Heart left ventricle (tissue), 16 donors: ENCODE measurements at regions of chr11 and their contacts with region 1.

Region 1: DNA sequence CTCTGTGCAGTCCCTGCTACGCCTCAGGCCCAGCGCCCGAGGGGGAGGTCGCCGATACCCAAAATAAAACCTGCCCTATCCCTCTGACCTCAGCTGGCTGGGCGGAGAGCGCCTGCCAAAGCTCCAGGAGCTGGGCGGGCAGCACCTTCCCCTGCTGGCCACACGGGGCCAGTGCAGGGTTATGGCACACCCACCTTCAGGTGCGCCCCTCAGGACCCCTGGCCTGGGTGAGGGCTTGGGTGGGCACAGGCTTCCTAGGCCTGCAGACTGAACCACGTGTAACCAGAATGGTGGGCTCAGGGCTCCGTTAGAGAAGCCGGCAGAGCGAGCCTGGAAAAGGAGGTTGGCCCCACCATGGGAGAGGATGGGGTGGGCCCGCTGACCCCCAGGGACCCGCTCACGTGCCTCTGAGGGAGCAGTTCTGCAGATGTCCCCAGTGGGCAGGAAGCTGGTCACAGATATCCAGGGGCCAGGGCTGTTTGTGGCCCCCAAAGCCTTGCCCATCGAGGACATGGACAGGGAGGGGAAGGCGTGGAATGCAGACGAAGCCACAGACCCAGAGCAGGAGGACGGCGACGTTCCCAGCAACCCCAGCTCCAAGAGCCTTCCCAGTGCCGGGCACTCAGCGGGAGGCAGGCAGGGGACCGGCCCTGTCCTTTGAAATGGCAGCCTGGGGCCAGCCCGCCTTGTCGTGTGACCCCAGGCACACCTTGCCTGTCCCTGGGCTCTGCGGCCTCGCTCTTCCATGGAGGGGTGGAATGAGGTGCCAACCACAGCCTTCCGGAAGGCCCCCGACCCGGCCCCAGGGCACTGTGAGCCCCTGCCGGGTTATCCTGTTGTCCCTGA is 1.6 kb upstream of the TNNT3 start:
- DNase-seq: peak in 4 of 5 donors; percentile 66 to 84 (median 77)
- ATAC-seq: peak; percentile 45 to 67 (median 59)
- H3K4me3 ChIP-seq: peak overlapping the region in 8 of 12 donors; percentile 7 to 40 (median 26)
- H3K27ac ChIP-seq: peak overlapping the region in 11 of 12 donors; percentile 38 to 93 (median 85)
- H3K4me1 ChIP-seq: peaks cover 12 to 66% (median 47%) of the 10 kb centered on the region in 12 donors
- H3K27me3 ChIP-seq: no peaks in the 10 kb centered on the region
- CTCF ChIP-seq: peak; percentile 51 to 78 (median 64)
- POLR2A ChIP-seq: no peak

Region 2: GRCh38 chr11:1714973-1715885 is 202.7 kb before region 1 on chr11:
- intact Hi-C with region 1: no loop called
- DNase-seq: peak in 4 of 5 donors; percentile 50 to 84 (median 59)
- ATAC-seq: peak; percentile 62 to 91 (median 88)
- H3K4me3 ChIP-seq: no peak overlapping the region
- H3K27ac ChIP-seq: peak overlapping the region in 1 of 12 donors; percentile 49
- H3K4me1 ChIP-seq: peaks cover 0 to 7% (median 0%) of the 10 kb centered on the region in 12 donors
- H3K27me3 ChIP-seq: peaks cover 0 to 6% (median 0%) of the 10 kb centered on the region in 9 donors
- CTCF ChIP-seq: no peak
- POLR2A ChIP-seq: no peak

Region 3: GRCh38 chr11:1842491-1843473 is 75.1 kb before region 1 on chr11:
- intact Hi-C with region 1: loop called in 4 of 10 experiments (anchors 2 to 10 kb)
- DNase-seq: peak; percentile 61 to 90 (median 79)
- ATAC-seq: peak; percentile 72 to 88 (median 84)
- H3K4me3 ChIP-seq: no peak overlapping the region
- H3K27ac ChIP-seq: peak overlapping the region in 10 of 12 donors; percentile 37 to 82 (median 64)
- H3K4me1 ChIP-seq: peaks cover 0 to 60% (median 21%) of the 10 kb centered on the region in 12 donors
- H3K27me3 ChIP-seq: no peaks in the 10 kb centered on the region
- CTCF ChIP-seq: no peak
- POLR2A ChIP-seq: no peak

Region 4: DNA sequence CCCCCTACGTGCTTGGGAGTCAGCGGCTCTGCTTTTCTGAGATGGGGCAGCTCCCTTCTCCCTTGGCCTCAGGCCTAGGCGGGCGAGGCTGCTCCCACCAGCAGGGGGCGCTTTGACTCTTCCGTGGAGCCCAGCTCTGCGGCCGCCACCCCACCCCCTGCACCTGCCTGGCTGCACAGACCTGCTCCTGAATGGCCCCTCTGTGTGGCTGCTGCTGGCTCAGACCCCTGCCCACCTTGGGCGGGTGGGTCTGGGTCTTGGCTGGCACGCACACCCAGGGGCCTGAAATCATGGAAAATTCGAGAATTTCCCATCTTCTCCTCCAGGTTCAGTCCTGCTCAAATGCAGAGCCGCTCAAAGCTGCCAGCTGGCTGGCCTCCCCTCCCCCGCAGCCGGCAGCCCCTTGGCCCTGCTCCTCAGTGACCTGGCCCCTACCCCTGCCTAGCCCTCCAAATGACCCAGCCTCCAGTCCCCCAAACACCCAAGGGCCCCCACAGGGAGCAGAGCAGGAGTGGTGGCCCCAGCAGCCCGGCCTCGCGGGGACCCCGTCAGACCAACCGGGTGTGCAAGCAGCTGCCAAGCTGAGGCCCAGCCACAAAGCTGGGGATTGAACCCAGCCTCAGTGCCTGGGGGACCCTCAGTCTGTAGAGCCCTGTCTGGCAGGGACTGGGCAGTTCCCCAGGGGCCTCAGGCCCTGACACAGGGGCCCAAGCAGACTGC is 35.2 kb before region 1 on chr11:
- intact Hi-C with region 1: loop called in 6 of 10 experiments (anchors 5 kb)
- DNase-seq: peak; percentile 87 to 94 (median 88)
- ATAC-seq: peak; percentile 75 to 83 (median 78)
- H3K4me3 ChIP-seq: peak overlapping the region in 1 of 12 donors; percentile 13
- H3K27ac ChIP-seq: peak overlapping the region; percentile 85 to 99 (median 96)
- H3K4me1 ChIP-seq: peaks cover 19 to 53% (median 44%) of the 10 kb centered on the region in 12 donors
- H3K27me3 ChIP-seq: no peaks in the 10 kb centered on the region
- CTCF ChIP-seq: peak; percentile 87 to 98 (median 93)
- POLR2A ChIP-seq: no peak

Region 5: GRCh38 chr11:1896923-1897322 is 21.0 kb before region 1 on chr11:
- intact Hi-C with region 1: loop called in 8 of 10 experiments (anchors 1 kb)
- DNase-seq: peak in 1 of 5 donors; percentile 33
- ATAC-seq: peak in 1 of 4 donors; percentile 29
- H3K4me3 ChIP-seq: peak overlapping the region in 4 of 12 donors; percentile 10 to 42 (median 14)
- H3K27ac ChIP-seq: peak overlapping the region in 2 of 12 donors; percentile 6 to 14
- H3K4me1 ChIP-seq: peaks cover 0 to 18% (median 0%) of the 10 kb centered on the region in 12 donors
- H3K27me3 ChIP-seq: no peaks in the 10 kb centered on the region
- CTCF ChIP-seq: no peak
- POLR2A ChIP-seq: no peak